ENCODE measurements at regions of chr16 and their contacts with region 1.

Region 1: GRCh38 chr16:71461686-71462648 is at the start of gene ZNF23:
- DNase-seq: peak; percentile 72 to 74
- ATAC-seq: peak; percentile 97
- H3K4me3 ChIP-seq: peak within 1 kb of the TSS; percentile 87 to 100 (median 98)
- H3K27ac ChIP-seq: peak within 1 kb of the TSS; percentile 87 to 94 (median 90)
- H3K4me1 ChIP-seq: peaks cover 14 to 21% of the 10 kb centered on the region in 2 donors
- H3K27me3 ChIP-seq: no peaks in the 10 kb centered on the region
- CTCF ChIP-seq: no peak
- POLR2A ChIP-seq: peak; percentile 47 to 65
- total RNA-seq, gene ZNF23: 3.6 to 5.6 (median 4.7) TPM

Region 2: GRCh38 chr16:71288890-71289733 is 172.9 kb before region 1 on chr16 and contains the start of gene CMTR2:
- in situ Hi-C with region 1: no loop called
- intact Hi-C with region 1: loop called (anchors 5 kb)
- DNase-seq: peak; percentile 86 to 93
- ATAC-seq: peak; percentile 96 to 98
- H3K4me3 ChIP-seq: peak within 1 kb of the TSS; percentile 81 to 87 (median 85)
- H3K27ac ChIP-seq: peak within 1 kb of the TSS; percentile 87 to 95 (median 90)
- H3K4me1 ChIP-seq: peaks cover 15 to 19% of the 10 kb centered on the region in 2 donors
- H3K27me3 ChIP-seq: no peaks in the 10 kb centered on the region
- CTCF ChIP-seq: no peak
- POLR2A ChIP-seq: peak; percentile 75 to 81
- total RNA-seq, gene CMTR2: 11.2 to 18.0 (median 12.3) TPM

Region 3: GRCh38 chr16:71484006-71484893 is 22.3 kb after region 1 on chr16:
- in situ Hi-C with region 1: no loop called
- intact Hi-C with region 1: loop called (anchors 1 kb)
- DNase-seq: peak; percentile 79 to 80
- ATAC-seq: peak; percentile 99 to 100
- H3K4me3 ChIP-seq: peak overlapping the region; percentile 92 to 99 (median 96)
- H3K27ac ChIP-seq: peak overlapping the region; percentile 91 to 98 (median 97)
- H3K4me1 ChIP-seq: peaks cover 11 to 13% of the 10 kb centered on the region in 2 donors
- H3K27me3 ChIP-seq: no peaks in the 10 kb centered on the region
- CTCF ChIP-seq: no peak
- POLR2A ChIP-seq: peak; percentile 45 to 49

Region 4: DNA sequence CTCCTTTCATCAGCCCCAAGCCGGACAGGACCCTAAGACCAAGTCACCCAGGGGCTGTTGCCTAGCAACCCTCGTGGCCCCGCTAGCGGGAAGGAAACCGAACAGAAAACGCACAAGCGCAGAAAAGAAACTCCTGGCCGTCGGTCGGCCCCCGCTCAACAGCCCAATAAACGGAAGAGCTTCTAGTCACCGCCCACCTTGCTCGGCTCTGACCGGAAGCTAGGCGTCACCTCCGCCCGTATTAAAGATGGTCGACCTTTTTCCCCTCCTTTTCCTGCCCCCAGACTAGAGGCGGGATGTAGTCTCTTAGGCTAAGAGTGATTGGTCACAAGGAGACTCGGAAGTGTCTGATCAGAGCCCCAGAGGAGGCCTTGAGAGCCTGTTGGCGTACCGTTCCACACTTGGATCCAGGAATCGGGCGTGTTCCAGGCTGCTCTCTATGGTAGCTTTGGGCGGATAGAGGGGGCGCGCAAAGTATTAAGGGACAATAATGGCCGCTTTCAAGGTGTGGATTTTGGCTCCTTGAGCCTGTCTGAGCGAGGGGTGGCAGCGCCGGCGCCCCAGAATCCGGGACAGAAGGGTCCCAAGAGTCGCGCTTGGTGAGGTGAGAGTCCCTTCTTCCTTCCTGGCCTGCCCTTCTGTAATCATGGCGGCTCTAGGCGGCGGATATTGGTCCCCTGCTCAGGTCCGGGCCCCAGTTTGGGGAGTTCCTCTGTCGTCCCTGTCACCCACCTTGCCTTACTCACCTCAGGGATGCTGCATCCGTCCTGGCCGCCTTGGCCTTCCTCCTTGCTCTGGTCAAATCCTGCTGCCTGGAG is 631.7 kb after region 1 on chr16 and contains the starts of genes DHX38 and TXNL4B:
- in situ Hi-C with region 1: no loop called
- intact Hi-C with region 1: loop called (anchors 2 kb)
- DNase-seq: peak; percentile 94 to 95
- ATAC-seq: peak; percentile 99 to 100
- H3K4me3 ChIP-seq: peak within 1 kb of the TSS; percentile 89 to 95 (median 92)
- H3K27ac ChIP-seq: peak within 1 kb of the TSS; percentile 87 to 96 (median 92)
- H3K4me1 ChIP-seq: peaks cover 29 to 32% of the 10 kb centered on the region in 2 donors
- H3K27me3 ChIP-seq: no peaks in the 10 kb centered on the region
- CTCF ChIP-seq: no peak
- POLR2A ChIP-seq: peak; percentile 87 to 93
- total RNA-seq, gene DHX38: 26.9 to 75.3 (median 53.8) TPM
- total RNA-seq, gene TXNL4B: 6.0 to 13.7 (median 10.0) TPM

Measured in gastrocnemius medialis (tissue), 4 donors.